GM12878 (cell line): ENCODE measurements at regions of chr1 and their contacts with region 1.

Region 1: GRCh38 chr1:8302081-8302956 is 15.6 kb upstream of the SLC45A1 start:
- DNase-seq: no peak
- ATAC-seq: no peak
- H3K4me3 ChIP-seq: no peak overlapping the region
- H3K27ac ChIP-seq: no peak overlapping the region
- H3K4me1 ChIP-seq: no peaks in the 10 kb centered on the region
- H3K27me3 ChIP-seq: no peaks in the 10 kb centered on the region
- CTCF ChIP-seq: no peak
- EP300 ChIP-seq: no peak
- POLR2A ChIP-seq: no peak
- RAD21 ChIP-seq: no peak

Region 2: DNA sequence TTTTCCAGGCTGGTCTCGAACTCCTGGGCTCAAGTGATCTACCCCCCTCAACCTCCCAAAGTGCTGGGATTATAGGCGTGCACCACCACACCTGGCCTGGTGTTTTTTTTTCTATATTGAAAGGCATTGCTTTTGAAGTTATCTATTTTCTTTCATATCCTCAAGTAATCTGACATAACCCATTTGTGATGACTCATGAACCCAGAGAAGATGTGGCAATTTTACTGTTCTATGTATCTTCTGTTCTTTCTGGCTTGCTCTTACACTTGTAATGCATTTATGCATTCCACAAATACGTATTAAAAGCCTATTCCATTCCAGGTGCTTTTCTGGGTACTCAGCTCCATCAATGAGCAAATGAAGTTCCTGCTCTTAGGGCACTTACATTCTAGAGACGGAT is 246.3 kb before region 1 on chr1:
- CTCF ChIA-PET with region 1: no interaction called
- POLR2A ChIA-PET with region 1: no interaction called
- RAD21 ChIA-PET with region 1: no interaction called
- SMC1A ChIA-PET with region 1: no interaction called
- in situ Hi-C with region 1: no loop called
- intact Hi-C with region 1: no loop called
- DNase-seq: no peak
- ATAC-seq: no peak
- H3K4me3 ChIP-seq: no peak overlapping the region
- H3K27ac ChIP-seq: no peak overlapping the region
- H3K4me1 ChIP-seq: no peaks in the 10 kb centered on the region
- H3K27me3 ChIP-seq: no peaks in the 10 kb centered on the region
- CTCF ChIP-seq: no peak
- EP300 ChIP-seq: no peak
- POLR2A ChIP-seq: no peak
- RAD21 ChIP-seq: no peak

Region 3: DNA sequence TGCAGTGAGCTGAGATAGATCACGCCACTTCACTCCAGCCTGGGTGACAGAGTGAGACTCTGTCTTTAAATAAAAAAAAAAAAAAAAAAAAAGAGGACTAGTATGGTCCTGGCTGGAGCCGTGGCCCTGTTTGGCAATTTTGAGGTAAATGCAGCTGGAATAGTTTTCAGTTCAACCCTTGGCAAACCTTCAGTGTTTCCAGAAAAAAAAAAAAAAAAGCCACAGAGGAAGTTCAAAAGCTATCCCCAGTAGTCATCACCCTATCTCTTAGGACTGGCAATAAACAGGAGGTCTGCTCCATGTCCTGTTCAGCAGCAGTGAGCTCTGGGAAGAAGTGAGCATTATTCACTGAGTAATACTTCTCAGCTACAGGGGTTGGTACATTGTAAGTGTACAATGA is 219.4 kb before region 1 on chr1:
- CTCF ChIA-PET with region 1: no interaction called
- POLR2A ChIA-PET with region 1: interaction called, 12 read pairs
- RAD21 ChIA-PET with region 1: no interaction called
- SMC1A ChIA-PET with region 1: no interaction called
- in situ Hi-C with region 1: no loop called
- intact Hi-C with region 1: no loop called
- DNase-seq: no peak
- ATAC-seq: no peak
- H3K4me3 ChIP-seq: no peak overlapping the region
- H3K27ac ChIP-seq: no peak overlapping the region
- H3K4me1 ChIP-seq: no peaks in the 10 kb centered on the region
- H3K27me3 ChIP-seq: no peaks in the 10 kb centered on the region
- CTCF ChIP-seq: no peak
- EP300 ChIP-seq: no peak
- POLR2A ChIP-seq: no peak
- RAD21 ChIP-seq: no peak

Region 4: DNA sequence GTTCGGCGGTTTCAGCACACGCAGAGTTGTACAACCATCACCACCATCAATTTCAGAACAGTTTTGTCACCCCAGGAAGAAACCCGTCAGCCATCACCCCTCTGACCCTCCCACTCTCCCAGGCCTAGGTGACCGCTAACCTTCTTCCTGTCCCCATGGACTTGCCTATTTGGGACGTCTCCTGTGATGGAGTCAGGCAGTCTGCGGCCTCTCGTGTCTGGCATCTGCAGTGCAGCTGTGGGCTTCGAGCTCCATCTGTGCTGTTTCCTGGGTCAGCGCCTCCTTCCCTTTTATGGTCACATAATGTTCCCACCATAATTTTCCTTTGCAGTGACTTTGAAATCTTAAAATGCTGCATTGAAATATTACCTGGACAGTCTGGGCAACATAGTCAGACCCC is 40.0 kb after region 1 on chr1:
- CTCF ChIA-PET with region 1: no interaction called
- POLR2A ChIA-PET with region 1: no interaction called
- RAD21 ChIA-PET with region 1: no interaction called
- SMC1A ChIA-PET with region 1: no interaction called
- in situ Hi-C with region 1: no loop called
- intact Hi-C with region 1: no loop called
- DNase-seq: no peak
- ATAC-seq: no peak
- H3K4me3 ChIP-seq: no peak overlapping the region
- H3K27ac ChIP-seq: no peak overlapping the region
- H3K4me1 ChIP-seq: no peaks in the 10 kb centered on the region
- H3K27me3 ChIP-seq: no peaks in the 10 kb centered on the region
- CTCF ChIP-seq: no peak
- EP300 ChIP-seq: no peak
- POLR2A ChIP-seq: no peak
- RAD21 ChIP-seq: no peak